Dendritic cell treated with granulocyte-macrophage colony-stimulating factor and Interleukin-4, amounts not matched to agents 40 ng/mL and 50 ng/mL, for 4 days (primary cell): ENCODE measurements at regions of chr5 and their contacts with region 1.

Region 1: DNA sequence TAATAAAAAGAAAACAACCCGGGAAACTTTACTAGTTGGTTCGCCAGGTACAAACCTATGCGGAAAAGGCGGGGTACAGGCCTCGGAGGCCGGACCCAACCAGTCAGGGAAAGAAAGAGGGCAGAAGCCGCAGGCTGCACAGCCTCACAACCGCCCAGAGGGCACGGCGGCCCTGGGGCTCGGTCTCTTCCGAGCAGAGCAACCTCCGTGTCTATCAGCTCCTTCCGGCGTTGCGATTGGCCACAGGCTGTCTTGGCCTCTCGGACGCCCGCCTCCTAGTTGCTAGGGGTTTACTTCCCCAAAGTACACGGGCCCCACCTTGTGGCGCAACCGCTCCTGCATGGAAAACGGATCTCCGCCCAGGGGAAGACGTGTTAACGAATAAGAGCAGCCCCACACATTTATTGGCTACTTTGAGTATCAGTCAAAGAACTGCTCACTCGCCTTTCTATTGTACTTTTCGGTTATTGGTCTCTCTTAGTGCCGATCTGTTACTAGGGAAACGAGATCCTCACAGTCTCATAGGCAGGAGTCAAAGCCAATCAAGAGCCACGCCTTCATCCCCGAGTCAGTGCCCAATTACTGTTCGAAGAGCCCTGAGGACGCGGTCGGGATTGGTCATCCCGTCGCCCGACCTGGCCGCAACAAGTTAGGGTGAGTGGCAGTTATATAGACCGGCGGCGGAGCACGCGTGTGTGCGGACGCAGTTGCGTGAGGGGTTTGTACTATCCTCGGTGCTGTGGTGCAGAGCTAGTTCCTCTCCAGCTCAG is at the start of gene G3BP1:
- H3K4me3 Mint-ChIP-seq: peak within 1 kb of the TSS; percentile 89
- H3K27ac Mint-ChIP-seq: no peak within 1 kb of the TSS
- H3K4me1 Mint-ChIP-seq: peaks cover 25% of the 10 kb centered on the region
- H3K27me3 Mint-ChIP-seq: no peaks in the 10 kb centered on the region

Region 2: DNA sequence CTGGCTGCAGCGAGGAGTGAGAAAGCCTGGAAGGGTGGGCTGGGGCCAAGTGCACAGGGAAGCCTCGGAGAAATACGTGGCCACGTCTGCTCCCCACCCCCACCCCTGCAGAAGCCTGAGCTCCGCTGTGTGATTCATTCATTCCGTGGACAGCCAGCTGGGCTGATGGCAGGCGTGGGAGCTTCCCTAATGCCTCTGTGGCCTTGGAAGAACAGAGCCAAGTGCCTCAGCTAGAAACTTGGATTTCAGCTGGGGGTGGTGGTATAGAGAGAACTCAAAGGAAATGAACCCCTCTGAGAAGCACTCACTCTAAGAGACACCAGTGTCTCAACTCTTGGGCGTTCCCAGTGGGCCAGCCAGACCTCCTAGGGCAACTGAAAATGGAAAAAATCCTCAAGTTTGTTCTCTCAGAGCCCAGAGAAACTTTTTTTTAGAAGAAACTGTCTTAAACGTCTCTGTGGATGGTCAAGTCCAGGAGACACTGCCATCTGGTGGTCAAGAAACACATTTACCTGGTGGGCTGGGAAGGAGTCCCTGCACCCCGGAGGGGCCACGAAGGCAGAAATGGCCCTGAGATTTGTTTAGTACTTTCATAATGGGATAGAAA is 31.0 kb before region 1 on chr5:
- intact Hi-C with region 1: loop called (anchors 2 kb)
- H3K4me3 Mint-ChIP-seq: no peak overlapping the region
- H3K27ac Mint-ChIP-seq: no peak overlapping the region
- H3K4me1 Mint-ChIP-seq: peaks cover 17% of the 10 kb centered on the region
- H3K27me3 Mint-ChIP-seq: no peaks in the 10 kb centered on the region

Region 3: GRCh38 chr5:151758430-151759241 is 12.8 kb before region 1 on chr5 and contains the start of gene ATOX1:
- intact Hi-C with region 1: loop called (anchors 1 kb)
- H3K4me3 Mint-ChIP-seq: peak within 1 kb of the TSS; percentile 87
- H3K27ac Mint-ChIP-seq: peak within 1 kb of the TSS; percentile 83
- H3K4me1 Mint-ChIP-seq: peaks cover 34% of the 10 kb centered on the region
- H3K27me3 Mint-ChIP-seq: no peaks in the 10 kb centered on the region